OCI-LY7 (cell line): ENCODE measurements at regions of chr13 and their contacts with region 1.

Region 1: GRCh38 chr13:46369506-46370277 is 17.4 kb downstream of the RUBCNL start:
- DNase-seq: peak; percentile 57
- H3K4me3 ChIP-seq: peak overlapping the region; percentile 83
- H3K27ac ChIP-seq: peak overlapping the region; percentile 96
- H3K4me1 ChIP-seq: peaks cover 54% of the 10 kb centered on the region
- CTCF ChIP-seq: no peak

Region 2: DNA sequence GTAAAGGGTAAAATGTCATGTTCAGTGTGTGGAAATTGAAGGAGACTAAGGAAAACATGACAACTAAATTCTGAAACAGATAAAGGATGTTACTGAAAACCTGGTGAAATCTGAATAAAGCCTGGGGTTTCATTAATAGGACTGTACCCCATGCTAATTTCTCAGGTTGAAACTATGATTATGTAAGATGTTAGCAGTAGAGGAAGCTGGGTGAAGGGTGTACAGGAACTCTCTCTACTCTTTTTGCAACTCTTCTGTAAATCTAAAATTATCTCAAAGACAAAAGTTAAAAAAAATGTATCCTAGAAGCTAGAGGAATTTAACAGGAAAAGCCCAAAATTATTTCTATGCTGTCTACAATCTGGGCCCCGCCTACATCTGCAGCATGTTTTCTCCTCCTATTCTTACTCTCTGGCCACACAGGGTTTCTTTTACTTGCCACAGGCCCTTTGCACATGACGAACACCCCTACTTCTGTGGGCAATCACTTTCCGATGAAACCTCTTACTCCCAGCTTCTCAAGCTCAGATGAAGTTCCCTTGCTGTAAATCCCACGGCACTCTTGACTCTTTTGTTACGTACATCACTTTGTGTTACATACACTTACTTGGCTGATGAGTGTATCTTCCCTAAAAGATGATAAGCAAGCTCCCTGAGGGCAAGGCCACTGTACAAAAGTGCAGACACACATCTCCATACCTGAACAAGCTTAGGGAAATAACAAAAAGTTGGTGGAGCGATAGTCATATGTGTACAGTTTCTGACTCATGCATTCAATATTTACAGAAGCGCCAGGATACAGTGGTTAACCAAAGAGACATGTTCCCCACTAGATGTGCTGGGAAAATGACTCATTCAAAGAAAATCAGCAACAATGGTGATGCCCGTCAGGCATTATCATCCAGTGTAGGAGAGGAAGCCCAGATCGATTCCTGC is 15.3 kb before region 1 on chr13:
- CTCF ChIA-PET with region 1: no interaction called
- POLR2A ChIA-PET with region 1: interaction called, 24 read pairs
- intact Hi-C with region 1: no loop called
- DNase-seq: no peak
- H3K4me3 ChIP-seq: no peak overlapping the region
- H3K27ac ChIP-seq: no peak overlapping the region
- H3K4me1 ChIP-seq: no peaks in the 10 kb centered on the region
- CTCF ChIP-seq: no peak

Region 3: DNA sequence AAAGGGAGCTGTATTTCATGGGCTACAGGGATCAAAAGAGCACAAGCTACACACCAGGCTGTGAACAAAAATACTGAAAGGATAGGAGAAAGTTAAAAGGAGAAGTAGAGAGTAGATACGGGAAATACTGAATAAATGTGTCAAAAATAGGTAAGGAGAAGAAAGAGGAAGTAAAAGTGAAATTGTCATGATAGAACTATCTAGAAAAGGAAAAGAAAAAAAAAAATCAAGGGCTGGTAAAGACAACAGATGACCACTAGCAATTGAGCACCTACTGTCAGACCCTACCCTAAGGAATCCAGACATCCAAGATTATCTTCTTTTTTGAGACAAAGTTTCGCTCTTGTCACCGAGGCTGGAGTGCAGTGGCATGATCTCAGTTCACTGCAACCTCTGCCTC is 12.5 kb after region 1 on chr13:
- CTCF ChIA-PET with region 1: interaction called, 4 read pairs
- POLR2A ChIA-PET with region 1: interaction called, 211 read pairs
- intact Hi-C with region 1: loop called (anchors 1 kb)
- DNase-seq: peak; percentile 81
- H3K4me3 ChIP-seq: peak overlapping the region; percentile 89
- H3K27ac ChIP-seq: peak overlapping the region; percentile 96
- H3K4me1 ChIP-seq: peaks cover 67% of the 10 kb centered on the region
- CTCF ChIP-seq: no peak

Region 4: GRCh38 chr13:46403851-46404732 is 34.4 kb after region 1 on chr13:
- CTCF ChIA-PET with region 1: no interaction called
- POLR2A ChIA-PET with region 1: interaction called, 10 read pairs
- intact Hi-C with region 1: no loop called
- DNase-seq: peak; percentile 46
- H3K4me3 ChIP-seq: no peak overlapping the region
- H3K27ac ChIP-seq: peak overlapping the region; percentile 24
- H3K4me1 ChIP-seq: peaks cover 68% of the 10 kb centered on the region
- CTCF ChIP-seq: no peak